BJ (cell line): ENCODE measurements at regions of chr4 and their contacts with region 1.

Region 1: GRCh38 chr4:53929955-53930798 is 134.2 kb downstream of the CHIC2 start:
- DNase-seq: peak; percentile 52
- H3K4me3 ChIP-seq: no peak overlapping the region
- H3K27me3 ChIP-seq: no peaks in the 10 kb centered on the region
- CTCF ChIP-seq: peak; percentile 73

Region 2: GRCh38 chr4:53920116-53920515 is 10.1 kb before region 1 on chr4:
- CTCF ChIA-PET with region 1: interaction called, 11 read pairs
- POLR2A ChIA-PET with region 1: no interaction called
- DNase-seq: no peak
- H3K4me3 ChIP-seq: no peak overlapping the region
- H3K27me3 ChIP-seq: no peaks in the 10 kb centered on the region
- CTCF ChIP-seq: no peak

Region 3: DNA sequence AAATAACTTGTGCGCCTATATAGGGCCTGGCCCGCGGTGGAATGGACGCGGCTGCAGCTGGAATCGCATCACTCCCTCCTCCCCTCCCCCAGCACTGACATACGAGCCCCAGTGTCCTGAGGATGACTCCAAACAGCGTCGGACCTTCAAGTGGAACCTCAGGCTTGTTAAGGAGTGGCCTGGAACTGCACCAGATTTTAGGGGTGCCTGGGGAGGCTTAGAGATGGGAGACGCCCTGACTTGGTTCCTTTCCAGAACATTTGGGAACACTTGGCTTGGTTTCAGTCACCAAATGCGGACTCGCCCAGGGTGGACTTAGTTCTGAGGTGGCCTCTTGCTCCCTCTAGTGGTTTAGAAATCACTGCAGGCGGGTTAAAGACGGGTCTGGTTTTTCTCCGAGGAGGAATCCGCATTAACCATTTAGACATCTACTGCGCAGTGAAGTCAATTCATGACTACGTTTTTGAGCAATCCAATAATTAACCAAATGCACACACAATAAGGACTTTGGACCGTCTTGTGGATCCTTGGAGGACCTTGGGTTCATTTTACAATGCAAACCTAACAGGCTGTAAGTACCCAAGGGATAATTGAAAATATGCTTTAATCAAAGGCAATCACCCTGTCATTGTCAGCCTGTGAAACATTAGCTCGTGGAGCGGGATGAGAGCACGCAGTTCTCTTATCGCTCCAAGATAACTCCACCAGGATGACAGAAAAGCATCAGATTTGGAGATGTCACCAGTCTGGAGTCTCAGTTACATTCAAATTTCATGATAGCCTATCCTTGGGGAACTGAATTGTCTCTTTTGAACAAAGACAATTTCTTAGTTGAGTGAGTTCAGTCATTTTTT is 287.7 kb after region 1 on chr4:
- CTCF ChIA-PET with region 1: interaction called, 58 read pairs
- POLR2A ChIA-PET with region 1: no interaction called
- DNase-seq: peak; percentile 72
- H3K4me3 ChIP-seq: peak overlapping the region; percentile 39
- H3K27me3 ChIP-seq: no peaks in the 10 kb centered on the region; the same call in 1 of the 2 replicates
- CTCF ChIP-seq: peak; percentile 87

Region 4: GRCh38 chr4:54228056-54228527 is 297.9 kb after region 1 on chr4:
- CTCF ChIA-PET with region 1: interaction called, 34 read pairs
- POLR2A ChIA-PET with region 1: interaction called, 3 read pairs
- DNase-seq: no peak
- H3K4me3 ChIP-seq: peak overlapping the region; percentile 92
- H3K27me3 ChIP-seq: no peaks in the 10 kb centered on the region
- CTCF ChIP-seq: peak; percentile 97